Natural killer cell (primary cell): ENCODE measurements at regions of chr14 and their contacts with region 1.

Region 1: DNA sequence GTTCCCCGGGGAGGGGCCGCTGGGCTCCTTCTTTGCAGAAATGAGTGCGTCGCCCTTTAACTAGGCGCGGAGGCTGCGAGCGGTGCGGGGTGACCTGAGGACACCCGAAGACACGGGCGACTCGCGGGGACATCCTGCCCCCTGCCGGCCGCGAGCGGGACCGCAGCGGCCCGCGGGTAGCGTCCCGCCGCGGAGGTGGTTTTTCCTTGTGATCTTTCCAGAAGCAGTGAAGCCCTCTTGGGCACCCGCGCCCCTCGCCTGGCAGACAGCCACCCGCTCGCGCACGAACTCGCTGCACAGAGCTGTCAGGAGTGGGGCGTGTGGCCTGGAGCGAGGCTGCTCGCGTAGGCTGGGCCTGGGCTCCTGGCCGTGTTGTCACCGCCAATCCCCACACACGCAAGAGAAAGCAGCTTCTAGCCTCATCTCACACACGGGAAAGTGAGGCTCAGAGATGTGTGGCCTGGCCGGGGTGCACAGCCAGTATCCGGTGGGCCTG is 67.2 kb downstream of the DIO3 start:
- DNase-seq: peak; percentile 73 to 85
- ATAC-seq: peak; percentile 89 to 100 (median 99)
- H3K4me3 ChIP-seq: no peak overlapping the region
- H3K4me3 Mint-ChIP-seq: no peak overlapping the region
- H3K27ac ChIP-seq: no peak overlapping the region
- H3K27ac Mint-ChIP-seq: no peak overlapping the region
- H3K4me1 ChIP-seq: peaks cover 12% of the 10 kb centered on the region
- H3K4me1 Mint-ChIP-seq: peaks cover 9 to 12% of the 10 kb centered on the region in 2 donors
- H3K27me3 ChIP-seq: peaks cover 8% of the 10 kb centered on the region
- H3K27me3 Mint-ChIP-seq: peaks cover 0 to 21% of the 10 kb centered on the region in 2 donors
- CTCF ChIP-seq: peak; percentile 96

Region 2: DNA sequence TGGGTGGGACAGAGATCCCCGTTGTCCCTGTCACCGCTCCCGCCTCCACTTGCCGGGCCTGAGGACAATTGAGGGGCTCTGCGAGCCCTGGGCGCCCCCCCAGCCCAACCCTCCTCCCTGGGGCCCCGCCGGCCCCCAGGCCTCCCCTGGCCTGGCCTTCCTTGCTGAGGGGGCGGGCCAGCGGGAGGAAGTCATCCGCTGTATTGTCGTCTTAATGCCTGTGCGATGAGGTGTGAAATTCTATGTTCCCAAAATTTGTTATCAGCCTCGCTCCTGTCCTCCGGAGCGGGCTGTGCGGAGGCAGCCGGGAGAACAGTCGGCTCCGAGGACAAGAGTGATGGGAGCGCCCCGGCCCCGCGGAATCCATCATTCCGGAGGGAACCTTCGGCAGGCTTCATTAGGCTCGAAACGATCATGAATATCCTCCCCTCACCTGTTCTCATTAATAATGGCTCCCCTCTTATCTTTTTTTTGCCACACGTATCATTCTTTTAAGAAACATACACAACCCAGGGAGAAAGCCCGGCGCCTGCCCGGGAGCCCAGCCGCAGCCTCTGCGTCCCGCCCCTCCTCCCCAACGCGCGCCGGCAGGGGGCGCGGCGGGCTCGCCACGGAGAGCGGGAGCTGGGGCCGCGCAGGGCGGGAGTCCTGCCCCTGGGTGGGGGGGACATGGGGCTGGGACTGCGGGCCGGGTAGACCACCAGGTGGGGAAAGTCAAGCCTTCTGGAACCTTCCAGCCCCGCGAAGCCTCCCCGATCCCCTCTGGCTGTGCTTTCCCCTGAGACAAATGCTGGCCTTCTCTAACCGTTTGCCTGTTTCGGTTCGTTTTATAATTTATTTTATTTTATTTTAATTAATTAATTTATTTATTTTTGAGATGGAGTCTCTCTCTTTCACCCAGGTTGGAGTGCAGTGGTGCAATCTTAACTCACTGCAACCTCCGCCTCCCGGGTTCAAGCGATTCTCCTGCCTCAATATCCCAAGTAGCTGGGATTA is 918.9 kb before region 1 on chr14:
- intact Hi-C with region 1: loop called (anchors 5 kb)
- DNase-seq: peak in 1 of 2 donors; percentile 41
- ATAC-seq: peak in 1 of 3 donors; percentile 72
- H3K4me3 ChIP-seq: no peak overlapping the region
- H3K4me3 Mint-ChIP-seq: no peak overlapping the region
- H3K27ac ChIP-seq: no peak overlapping the region
- H3K27ac Mint-ChIP-seq: no peak overlapping the region
- H3K4me1 ChIP-seq: peaks cover 7% of the 10 kb centered on the region
- H3K4me1 Mint-ChIP-seq: peaks cover 0 to 5% of the 10 kb centered on the region in 2 donors
- H3K27me3 ChIP-seq: no peaks in the 10 kb centered on the region
- H3K27me3 Mint-ChIP-seq: peaks cover 11 to 19% of the 10 kb centered on the region in 2 donors
- CTCF ChIP-seq: peak; percentile 63

Region 3: GRCh38 chr14:100850841-100851585 is 777.5 kb before region 1 on chr14:
- intact Hi-C with region 1: loop called (anchors 1 kb)
- DNase-seq: peak; percentile 70 to 81
- ATAC-seq: peak; percentile 71 to 87 (median 71)
- H3K4me3 ChIP-seq: no peak overlapping the region
- H3K4me3 Mint-ChIP-seq: no peak overlapping the region
- H3K27ac ChIP-seq: no peak overlapping the region
- H3K27ac Mint-ChIP-seq: no peak overlapping the region
- H3K4me1 ChIP-seq: no peaks in the 10 kb centered on the region
- H3K4me1 Mint-ChIP-seq: no peaks in the 10 kb centered on the region
- H3K27me3 ChIP-seq: no peaks in the 10 kb centered on the region
- H3K27me3 Mint-ChIP-seq: no peaks in the 10 kb centered on the region
- CTCF ChIP-seq: peak; percentile 77

Region 4: DNA sequence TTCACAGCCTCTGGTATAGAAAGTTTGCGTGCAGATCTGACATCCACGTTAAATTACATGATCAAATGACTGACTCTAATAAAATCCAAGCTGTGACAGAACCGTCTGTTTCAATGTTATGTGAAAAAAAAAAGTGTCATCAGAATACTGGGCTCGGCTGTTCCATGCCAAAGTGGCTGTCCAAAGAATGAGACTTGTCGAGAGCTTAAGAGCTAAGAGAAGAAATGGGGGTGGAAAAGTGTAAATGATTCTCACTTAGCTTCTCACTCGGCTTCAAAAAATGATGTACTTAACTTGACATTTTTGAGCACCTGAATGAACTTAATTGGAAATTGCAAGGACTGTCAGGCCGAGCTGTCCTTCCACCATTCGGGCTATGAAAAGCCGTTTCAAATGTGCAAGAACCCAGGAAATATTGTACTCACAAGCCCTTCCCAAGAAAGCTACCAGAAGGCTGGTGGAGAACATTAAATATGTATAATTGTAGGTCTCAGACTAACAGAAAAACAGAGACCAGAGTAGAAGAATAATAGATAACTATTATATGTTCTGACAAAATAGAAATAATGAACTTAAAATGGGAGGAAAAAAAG is 10.8 kb after region 1 on chr14:
- intact Hi-C with region 1: no loop called
- DNase-seq: no peak
- ATAC-seq: no peak
- H3K4me3 ChIP-seq: no peak overlapping the region
- H3K4me3 Mint-ChIP-seq: no peak overlapping the region
- H3K27ac ChIP-seq: no peak overlapping the region
- H3K27ac Mint-ChIP-seq: no peak overlapping the region
- H3K4me1 ChIP-seq: no peaks in the 10 kb centered on the region
- H3K4me1 Mint-ChIP-seq: no peaks in the 10 kb centered on the region
- H3K27me3 ChIP-seq: peaks cover 4% of the 10 kb centered on the region
- H3K27me3 Mint-ChIP-seq: peaks cover 26 to 55% of the 10 kb centered on the region in 2 donors
- CTCF ChIP-seq: no peak